ENCODE measurements at regions of chr12 and their contacts with region 1.

Region 1: GRCh38 chr12:3885277-3886094 is 12.3 kb upstream of the PARP11 start:
- DNase-seq: peak; percentile 51
- H3K4me3 Mint-ChIP-seq: no peak overlapping the region
- H3K27ac Mint-ChIP-seq: no peak overlapping the region
- H3K4me1 Mint-ChIP-seq: peaks cover 14% of the 10 kb centered on the region
- H3K27me3 Mint-ChIP-seq: peaks cover 17% of the 10 kb centered on the region

Region 2: DNA sequence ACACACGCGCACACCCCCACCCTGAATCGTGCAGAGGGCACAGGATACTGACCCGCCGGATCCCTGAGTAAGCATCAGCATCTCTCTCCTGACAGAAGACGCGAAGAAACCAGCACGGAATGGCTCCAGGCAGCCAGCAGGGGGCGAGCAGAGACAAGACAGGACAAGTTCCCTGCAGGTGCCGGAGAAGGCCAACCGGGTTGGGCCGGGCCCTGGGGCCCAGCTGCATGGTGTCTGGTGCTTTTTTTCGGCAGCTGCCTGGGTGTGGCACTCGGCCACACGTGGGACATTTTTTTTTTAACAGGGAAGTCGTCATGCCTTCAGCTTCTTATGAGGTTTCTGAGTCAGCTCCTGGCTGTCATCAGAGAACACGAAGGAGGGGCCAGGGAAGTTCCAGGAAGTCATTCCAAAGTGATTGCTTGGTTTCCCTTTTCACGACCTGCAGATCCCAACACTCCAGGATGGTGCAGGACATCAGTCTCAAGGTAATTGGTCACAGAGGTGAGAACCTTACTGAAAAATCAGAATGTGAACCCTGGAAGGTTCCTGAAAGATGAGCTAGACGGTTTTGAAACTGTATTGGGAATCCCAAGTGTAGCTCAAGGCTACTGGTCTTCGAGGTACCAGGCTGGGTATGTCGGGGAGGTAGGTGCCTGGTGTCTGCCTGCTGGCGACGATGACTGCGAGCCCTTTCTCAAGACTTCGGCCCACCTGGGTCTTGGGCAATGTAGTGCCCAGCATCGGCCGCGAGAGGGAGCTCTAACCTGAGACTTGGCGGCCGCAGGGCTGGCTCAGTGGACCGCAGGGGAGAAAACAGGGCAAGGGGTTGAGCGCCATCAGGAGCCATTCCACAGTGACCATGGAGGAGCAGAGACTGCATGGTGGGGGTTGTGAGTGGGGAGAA is 585.3 kb before region 1 on chr12:
- CTCF ChIA-PET with region 1: interaction called, 12 read pairs
- DNase-seq: peak; percentile 89
- H3K4me3 Mint-ChIP-seq: no peak overlapping the region
- H3K27ac Mint-ChIP-seq: peak overlapping the region; percentile 60
- H3K4me1 Mint-ChIP-seq: peaks cover 10% of the 10 kb centered on the region
- H3K27me3 Mint-ChIP-seq: peaks cover 50% of the 10 kb centered on the region

Region 3: GRCh38 chr12:3727877-3728632 is 157.4 kb before region 1 on chr12:
- CTCF ChIA-PET with region 1: no interaction called
- DNase-seq: peak; percentile 57
- H3K4me3 Mint-ChIP-seq: peak overlapping the region; percentile 25
- H3K27ac Mint-ChIP-seq: peak overlapping the region; percentile 82
- H3K4me1 Mint-ChIP-seq: peaks cover 39% of the 10 kb centered on the region
- H3K27me3 Mint-ChIP-seq: no peaks in the 10 kb centered on the region

Region 4: GRCh38 chr12:3905664-3906063 is 20.2 kb after region 1 on chr12:
- CTCF ChIA-PET with region 1: interaction called, 13 read pairs
- DNase-seq: no peak
- H3K4me3 Mint-ChIP-seq: peak overlapping the region; percentile 73
- H3K27ac Mint-ChIP-seq: peak overlapping the region; percentile 43
- H3K4me1 Mint-ChIP-seq: peaks cover 40% of the 10 kb centered on the region
- H3K27me3 Mint-ChIP-seq: no peaks in the 10 kb centered on the region

Region 5: GRCh38 chr12:3988519-3989448 is 103.3 kb after region 1 on chr12:
- CTCF ChIA-PET with region 1: interaction called, 111 read pairs
- DNase-seq: peak; percentile 50
- H3K4me3 Mint-ChIP-seq: no peak overlapping the region
- H3K27ac Mint-ChIP-seq: peak overlapping the region; percentile 88
- H3K4me1 Mint-ChIP-seq: peaks cover 24% of the 10 kb centered on the region
- H3K27me3 Mint-ChIP-seq: peaks cover 23% of the 10 kb centered on the region

Region 6: DNA sequence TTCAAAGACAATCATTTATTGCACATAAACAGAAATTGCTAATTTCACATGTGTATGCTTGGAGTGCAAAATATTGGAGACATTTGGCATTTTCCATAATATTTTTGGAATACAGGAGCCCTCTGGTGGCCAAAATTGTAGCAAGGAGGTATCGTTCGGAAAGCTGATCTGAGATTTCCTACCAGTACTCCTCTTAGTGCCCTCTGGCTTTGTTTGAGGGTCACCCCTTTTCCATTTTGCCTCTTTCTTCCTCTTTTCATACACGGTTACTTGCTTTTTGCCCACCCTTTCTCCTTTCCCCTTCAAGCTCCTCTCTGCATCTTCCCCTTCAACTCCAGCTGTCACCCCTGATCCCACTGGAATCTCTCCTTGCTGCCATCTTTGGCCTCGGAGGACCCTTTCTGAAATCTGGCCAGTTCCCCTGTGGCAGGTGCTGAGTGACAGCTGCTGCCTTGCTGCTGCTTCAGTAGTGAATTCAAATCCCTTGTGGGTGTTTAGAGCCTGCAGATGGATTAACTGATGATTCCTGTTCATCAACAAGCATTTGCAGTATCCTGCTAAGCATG is 152.3 kb after region 1 on chr12:
- CTCF ChIA-PET with region 1: interaction called, 61 read pairs
- DNase-seq: no peak
- H3K4me3 Mint-ChIP-seq: no peak overlapping the region
- H3K27ac Mint-ChIP-seq: no peak overlapping the region
- H3K4me1 Mint-ChIP-seq: peaks cover 6% of the 10 kb centered on the region
- H3K27me3 Mint-ChIP-seq: peaks cover 31% of the 10 kb centered on the region

Measured in activated naive CD4-positive, alpha-beta T cell treated with anti-CD3 and anti-CD28 coated beads, Interleukin-2, amount 10 ng/mL, durations not matched to agents 7 days and 5 days (primary cell).